ENCODE measurements at regions of chr14 and their contacts with region 1.

Region 1: DNA sequence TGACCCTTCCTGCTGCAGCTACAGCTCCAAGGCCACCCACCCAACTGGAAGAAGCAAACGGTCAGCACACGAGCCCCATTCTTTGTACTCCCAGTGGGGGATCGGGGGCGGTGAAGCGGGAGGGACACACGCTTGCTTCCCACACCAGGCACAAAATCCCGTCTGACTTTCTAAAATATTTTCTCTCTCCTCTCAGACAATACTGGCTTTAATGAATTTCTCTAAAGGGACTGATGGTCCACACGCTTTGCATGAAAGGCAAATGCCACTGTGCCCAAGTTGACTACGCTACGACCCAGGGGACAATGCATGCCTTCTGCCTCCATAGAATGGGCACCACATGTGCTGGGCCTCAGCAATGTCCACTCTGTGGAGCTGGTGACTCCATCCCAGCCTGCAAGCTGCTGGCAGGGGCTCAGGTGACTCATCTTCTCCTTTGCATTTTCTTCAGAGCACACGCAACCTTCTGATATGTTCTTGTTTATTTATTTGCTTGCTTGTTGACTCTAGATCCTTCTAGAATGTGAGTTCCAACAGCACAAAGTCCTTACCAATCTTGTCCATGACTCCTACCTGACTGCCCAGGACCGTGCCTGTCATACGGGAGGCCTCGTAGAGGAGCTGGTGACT is 15.6 kb downstream of the SYNE3 start:
- DNase-seq: peak in 5 of 10 donors; percentile 52 to 90 (median 62)

Region 2: DNA sequence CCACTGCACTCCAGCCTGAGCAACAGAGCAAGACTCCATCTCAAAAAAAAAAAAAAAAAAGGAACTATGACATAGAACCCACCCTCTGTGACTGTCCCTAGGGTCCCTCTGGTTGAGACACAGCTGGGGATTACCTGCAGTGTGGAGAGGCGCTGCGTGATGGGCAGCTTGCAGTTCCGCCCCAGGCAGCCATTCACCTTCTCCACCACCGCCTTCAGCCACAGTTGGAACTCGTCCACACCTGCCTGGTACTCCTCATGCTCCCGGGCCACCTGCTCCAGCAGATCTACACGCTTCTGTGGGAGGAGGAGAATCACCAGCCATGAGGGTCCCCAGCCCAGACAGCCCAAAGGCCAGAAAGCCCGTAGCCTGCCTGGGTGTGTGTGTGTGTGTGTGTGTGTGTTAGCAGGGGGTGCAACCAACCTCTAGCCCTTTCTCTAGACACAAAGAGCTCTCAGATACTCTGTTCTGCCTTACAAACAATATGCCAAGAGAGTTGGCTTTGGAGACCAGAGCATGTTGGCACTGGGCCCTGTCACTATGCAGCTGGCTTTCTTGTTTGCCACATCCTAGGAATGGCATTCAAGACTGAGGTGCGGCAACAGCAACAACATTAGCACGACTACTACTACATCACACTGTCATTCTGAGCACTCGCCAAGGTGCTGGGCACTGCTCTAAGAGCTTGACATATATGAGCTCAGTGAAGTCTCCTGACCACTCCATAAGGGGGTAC is 43.7 kb before region 1 on chr14:
- intact Hi-C with region 1: loop called (anchors 5 kb)
- DNase-seq: peak; percentile 56 to 95 (median 75)

Measured in posterior cingulate gyrus (tissue), 11 donors.